ENCODE measurements at regions of chr12 and their contacts with region 1.

Region 1: DNA sequence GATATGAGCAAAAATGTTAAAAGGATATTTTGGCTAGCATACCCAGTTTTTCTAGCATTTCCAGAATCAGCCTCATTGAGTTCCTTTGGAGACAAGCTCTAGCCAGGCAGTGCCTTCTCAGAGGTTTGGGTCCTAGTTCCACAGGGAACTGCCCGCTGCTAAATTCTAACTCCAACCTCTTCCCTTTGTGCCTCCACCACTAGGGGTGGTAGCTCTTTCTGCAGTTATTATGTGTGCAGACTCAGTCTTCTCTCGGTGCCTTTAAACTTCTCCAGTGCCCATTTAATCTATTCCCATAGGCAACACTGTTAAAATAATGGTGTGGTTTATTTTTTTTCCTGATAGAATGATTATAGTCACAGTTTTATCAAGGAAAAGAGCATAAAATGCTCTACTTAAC is 21.5 kb upstream of the SLC25A3 start:
- DNase-seq: no peak
- ATAC-seq: no peak
- H3K4me3 Mint-ChIP-seq: no peak overlapping the region
- H3K27ac Mint-ChIP-seq: no peak overlapping the region
- H3K4me1 Mint-ChIP-seq: no peaks in the 10 kb centered on the region
- H3K27me3 Mint-ChIP-seq: no peaks in the 10 kb centered on the region

Region 2: GRCh38 chr12:98593351-98594049 is 21.5 kb after region 1 on chr12 and contains the start of gene SLC25A3:
- CTCF ChIA-PET with region 1: interaction called, 27 read pairs
- DNase-seq: peak; percentile 96
- ATAC-seq: peak; percentile 96
- H3K4me3 Mint-ChIP-seq: peak within 1 kb of the TSS; percentile 92
- H3K27ac Mint-ChIP-seq: peak within 1 kb of the TSS; percentile 98
- H3K4me1 Mint-ChIP-seq: peaks cover 30% of the 10 kb centered on the region
- H3K27me3 Mint-ChIP-seq: no peaks in the 10 kb centered on the region
- total RNA-seq, gene SLC25A3: 360 to 485 TPM

Region 3: DNA sequence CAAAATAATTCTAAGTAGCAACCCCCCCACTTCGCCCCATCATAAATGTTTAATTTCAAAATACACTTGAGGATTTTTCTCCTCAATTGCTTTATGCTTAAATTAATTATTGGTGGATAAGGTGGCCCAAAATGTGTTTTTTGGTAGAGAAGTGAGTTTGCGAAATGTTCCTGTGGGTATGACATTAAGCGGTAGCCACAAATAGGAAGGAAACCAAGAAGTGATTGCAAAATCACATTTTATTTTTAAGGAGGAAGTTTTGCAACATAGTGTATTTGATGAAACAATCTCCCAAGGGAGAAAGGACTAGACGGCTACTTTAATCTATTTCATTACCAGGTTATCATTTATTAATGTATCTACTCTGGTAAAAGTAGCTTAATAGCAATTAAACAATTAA is 46.9 kb after region 1 on chr12:
- CTCF ChIA-PET with region 1: no interaction called
- DNase-seq: no peak
- ATAC-seq: no peak
- H3K4me3 Mint-ChIP-seq: no peak overlapping the region
- H3K27ac Mint-ChIP-seq: no peak overlapping the region
- H3K4me1 Mint-ChIP-seq: no peaks in the 10 kb centered on the region
- H3K27me3 Mint-ChIP-seq: no peaks in the 10 kb centered on the region

Region 4: GRCh38 chr12:98653866-98654493 is 82.0 kb after region 1 on chr12:
- CTCF ChIA-PET with region 1: interaction called, 14 read pairs
- DNase-seq: no peak
- ATAC-seq: peak; percentile 37
- H3K4me3 Mint-ChIP-seq: no peak overlapping the region
- H3K27ac Mint-ChIP-seq: peak overlapping the region; percentile 15
- H3K4me1 Mint-ChIP-seq: peaks cover 22% of the 10 kb centered on the region
- H3K27me3 Mint-ChIP-seq: no peaks in the 10 kb centered on the region

Region 5: DNA sequence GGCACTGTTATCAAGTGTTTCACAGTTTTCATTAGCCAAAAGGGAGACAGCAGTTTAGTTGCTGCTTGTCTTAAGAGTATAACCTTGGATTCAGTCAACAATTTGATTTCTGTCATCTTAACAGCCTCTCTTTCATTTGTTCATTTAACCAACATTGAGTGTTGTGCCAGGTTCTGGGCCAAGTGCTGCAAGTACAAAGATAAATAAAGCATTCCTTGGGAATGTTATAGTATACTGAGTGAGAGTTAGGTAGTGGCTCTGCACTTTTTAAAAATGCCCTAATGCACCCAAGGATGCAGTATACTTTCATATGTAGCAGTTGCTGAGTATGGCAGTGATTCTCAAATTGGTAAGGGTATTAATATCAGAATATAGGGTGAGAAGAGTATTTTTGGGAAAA is 88.5 kb after region 1 on chr12:
- CTCF ChIA-PET with region 1: interaction called, 10 read pairs
- DNase-seq: no peak
- ATAC-seq: no peak
- H3K4me3 Mint-ChIP-seq: no peak overlapping the region
- H3K27ac Mint-ChIP-seq: peak overlapping the region; percentile 18
- H3K4me1 Mint-ChIP-seq: peaks cover 18% of the 10 kb centered on the region
- H3K27me3 Mint-ChIP-seq: no peaks in the 10 kb centered on the region

Region 6: DNA sequence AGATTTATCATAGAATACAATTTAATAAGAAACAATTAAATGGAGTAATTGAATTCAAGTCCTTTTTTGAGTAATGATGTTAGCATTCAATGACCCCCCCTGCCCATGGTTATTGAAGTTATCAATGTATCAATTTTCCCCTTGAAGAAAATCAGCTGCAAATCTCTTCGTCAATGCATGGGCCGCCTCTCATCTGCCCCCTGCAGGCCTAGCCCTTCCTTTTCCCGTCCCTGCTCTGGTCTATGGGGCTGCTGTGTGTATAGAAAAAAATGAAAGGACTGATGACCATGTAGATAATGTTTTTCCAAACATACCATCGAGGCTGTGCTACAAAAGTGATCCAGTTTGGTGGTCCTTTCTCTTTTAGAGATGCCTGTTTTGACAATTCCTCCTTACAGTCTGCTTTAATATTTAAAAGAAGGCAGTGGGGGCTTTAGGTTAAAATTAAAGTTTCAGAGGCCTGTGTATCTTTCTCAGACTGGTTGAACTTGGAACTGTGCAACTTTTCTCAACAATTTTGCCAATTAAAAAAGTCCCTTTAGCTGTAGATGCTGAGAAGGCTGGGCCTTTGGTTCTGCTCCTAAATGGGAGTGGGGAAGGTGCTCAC is 171.4 kb after region 1 on chr12:
- CTCF ChIA-PET with region 1: interaction called, 23 read pairs
- DNase-seq: peak; percentile 78
- ATAC-seq: peak; percentile 59
- H3K4me3 Mint-ChIP-seq: no peak overlapping the region
- H3K27ac Mint-ChIP-seq: peak overlapping the region; percentile 29
- H3K4me1 Mint-ChIP-seq: peaks cover 62% of the 10 kb centered on the region
- H3K27me3 Mint-ChIP-seq: peaks cover 6% of the 10 kb centered on the region

Region 7: DNA sequence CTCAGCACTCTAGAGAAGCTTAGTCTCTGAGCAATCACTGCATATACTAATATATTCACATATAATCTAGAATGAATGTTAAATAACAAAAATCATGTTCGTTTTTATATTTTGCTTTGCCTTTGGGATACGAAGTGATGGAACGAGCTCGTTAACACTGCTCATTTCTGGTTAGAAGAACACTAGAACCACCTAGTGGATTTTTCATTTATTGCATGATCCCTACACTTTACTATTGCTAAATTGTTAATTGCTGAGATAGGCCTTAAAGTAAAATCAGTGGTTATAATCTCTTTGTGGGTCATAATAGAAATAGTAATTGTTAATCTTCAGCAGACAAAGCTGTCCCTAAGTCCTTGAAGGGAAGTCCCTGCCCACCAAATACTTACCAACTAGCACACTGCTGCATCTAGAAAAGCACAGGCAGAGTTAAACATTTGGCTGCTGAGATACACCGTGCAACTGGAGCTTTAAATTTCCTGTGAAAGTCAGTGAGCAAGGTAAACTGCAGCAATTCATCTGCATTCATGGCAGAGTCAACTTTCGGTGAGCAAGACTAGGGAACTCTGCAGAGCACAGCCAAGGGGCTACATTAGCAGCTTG is 426.8 kb after region 1 on chr12:
- CTCF ChIA-PET with region 1: interaction called, 23 read pairs
- DNase-seq: no peak
- ATAC-seq: peak; percentile 66
- H3K4me3 Mint-ChIP-seq: no peak overlapping the region
- H3K27ac Mint-ChIP-seq: no peak overlapping the region
- H3K4me1 Mint-ChIP-seq: no peaks in the 10 kb centered on the region
- H3K27me3 Mint-ChIP-seq: peaks cover 6% of the 10 kb centered on the region